ENCODE measurements at regions of chr11 and their contacts with region 1.

Region 1: GRCh38 chr11:112440518-112440917 is 179.9 kb upstream of the PLET1 start:
- DNase-seq: no peak
- H3K27ac ChIP-seq: no peak overlapping the region
- CTCF ChIP-seq: no peak

Region 2: DNA sequence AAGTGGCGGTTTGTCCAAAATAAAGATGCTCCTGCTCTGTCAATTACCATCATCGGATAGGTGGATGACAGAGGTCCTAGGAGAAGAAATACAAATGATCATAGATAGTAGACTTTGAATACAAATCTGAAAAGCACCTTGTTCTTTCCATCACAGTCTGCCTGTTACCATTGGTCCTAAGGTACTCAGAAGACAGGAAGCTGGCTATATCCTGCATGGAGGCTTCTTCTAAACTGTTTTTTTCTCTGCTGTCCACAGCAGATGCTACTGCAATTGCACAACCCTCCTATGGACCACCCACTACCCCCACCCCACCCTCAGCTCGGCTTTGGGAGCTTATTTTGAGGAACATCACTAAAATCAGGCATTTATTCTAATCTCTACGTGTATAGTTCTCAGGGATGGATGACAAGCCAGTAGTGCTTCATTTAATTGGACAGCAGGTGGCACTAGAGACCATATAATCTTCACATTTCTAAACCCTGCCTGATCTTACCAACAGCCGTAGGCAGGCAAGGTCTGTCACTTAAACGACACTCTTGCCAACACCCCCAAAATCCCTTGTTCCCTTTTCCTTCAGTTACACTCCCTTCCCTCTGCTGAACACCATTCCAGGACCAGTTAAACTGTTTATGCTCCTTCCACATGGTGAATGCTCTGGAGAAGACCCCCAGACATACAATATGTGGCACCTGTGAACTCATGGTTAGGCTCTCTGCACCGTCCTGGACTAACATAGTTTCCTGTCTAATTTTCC is 220.9 kb before region 1 on chr11:
- CTCF ChIA-PET with region 1: interaction called, 10 read pairs
- POLR2A ChIA-PET with region 1: no interaction called
- DNase-seq: peak; percentile 62
- H3K27ac ChIP-seq: no peak overlapping the region
- CTCF ChIP-seq: peak; percentile 77

Region 3: DNA sequence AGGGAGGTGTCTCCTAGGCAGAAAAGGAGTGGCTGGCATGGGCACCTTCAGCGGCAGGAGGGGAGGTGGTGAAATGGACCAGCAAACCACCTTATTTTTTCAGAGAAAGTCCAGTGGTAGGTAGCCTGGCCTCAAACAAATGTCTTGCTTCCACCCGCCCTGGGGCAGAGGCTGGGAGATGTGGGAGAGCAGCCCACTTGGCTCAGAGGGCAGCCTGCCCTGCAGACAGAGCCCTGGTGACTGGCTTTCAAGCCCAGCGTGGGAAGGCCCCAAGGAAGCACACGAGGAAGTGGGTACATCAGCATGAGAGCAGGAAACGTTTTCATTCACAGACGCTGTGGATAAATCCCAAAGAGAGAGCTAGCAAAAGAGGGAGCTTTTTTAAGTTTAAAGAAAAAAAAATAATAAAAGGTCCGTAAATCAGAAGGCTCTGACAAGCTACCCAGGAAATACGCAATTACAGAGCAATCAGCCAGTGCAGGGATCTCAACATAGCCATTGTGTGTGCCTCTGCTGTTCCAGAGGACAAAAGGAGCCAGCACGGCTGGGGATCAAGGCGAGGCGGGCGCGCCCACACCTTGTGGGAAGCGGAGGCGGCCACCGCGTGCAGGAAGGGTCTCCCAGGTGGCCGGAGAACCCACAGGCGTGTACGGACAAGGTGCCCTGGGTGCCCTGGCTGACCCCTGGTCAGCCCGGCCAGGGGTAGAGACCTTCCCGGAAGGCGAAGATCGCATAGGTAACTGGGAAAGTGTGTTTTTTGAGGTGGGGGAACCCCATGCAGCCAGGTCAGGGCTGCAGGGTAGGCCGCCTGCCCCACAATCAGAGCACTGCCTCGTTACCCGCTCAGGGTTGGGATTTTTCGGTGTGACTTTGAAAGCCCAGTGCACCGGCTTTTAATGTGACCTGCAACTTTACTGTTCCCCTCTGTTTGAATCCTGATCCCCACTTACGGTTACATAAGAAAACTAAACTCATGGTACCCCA is 59.0 kb after region 1 on chr11:
- CTCF ChIA-PET with region 1: no interaction called
- POLR2A ChIA-PET with region 1: no interaction called
- DNase-seq: no peak
- H3K27ac ChIP-seq: no peak overlapping the region
- CTCF ChIP-seq: no peak